ENCODE measurements at regions of chr11 and their contacts with region 1.

Region 1: DNA sequence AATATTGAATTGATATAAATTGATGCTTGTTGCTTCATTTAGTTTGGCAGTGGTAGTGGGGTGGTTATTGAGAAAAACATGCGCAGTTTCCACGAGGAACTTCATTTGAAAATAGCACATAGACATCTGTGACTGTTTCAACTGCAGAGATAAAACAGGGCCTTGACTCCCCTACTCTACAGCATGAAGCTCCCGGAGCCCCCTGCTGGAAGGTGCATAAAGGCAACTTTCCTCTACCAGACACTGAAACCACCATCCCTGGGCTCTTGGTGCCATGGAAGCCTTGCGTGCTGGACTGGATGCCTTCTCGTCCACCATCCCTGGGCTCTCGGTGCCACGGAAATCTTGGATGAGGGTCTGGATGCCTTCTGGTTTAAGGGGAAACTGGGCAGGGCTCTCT is 195.9 kb downstream of the CSNK2A3 start:
- DNase-seq: peak; percentile 69
- ATAC-seq: peak; percentile 42
- H3K4me3 Mint-ChIP-seq: no peak overlapping the region
- H3K27ac Mint-ChIP-seq: peak overlapping the region; percentile 76
- H3K4me1 Mint-ChIP-seq: peaks cover 26% of the 10 kb centered on the region
- H3K27me3 Mint-ChIP-seq: no peaks in the 10 kb centered on the region

Region 2: DNA sequence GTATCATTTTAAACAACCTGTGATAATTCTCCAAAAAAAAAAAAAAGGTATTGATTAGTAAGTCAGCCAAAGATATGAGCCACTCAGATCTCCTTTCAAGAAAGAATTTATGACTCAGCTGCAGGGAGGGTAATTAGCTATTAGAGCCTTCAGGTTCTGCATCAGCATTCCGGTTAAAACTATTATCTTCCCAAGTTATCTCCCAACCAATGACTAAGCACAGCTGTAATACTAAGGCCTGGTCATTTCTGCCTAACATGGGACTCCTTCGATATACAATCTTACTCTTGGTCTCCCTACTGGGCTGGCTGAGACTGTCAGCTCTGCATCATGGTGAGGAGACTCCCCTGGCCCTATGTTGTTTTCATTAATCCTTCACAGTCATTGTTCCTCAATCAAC is 923.6 kb before region 1 on chr11:
- CTCF ChIA-PET with region 1: no interaction called
- POLR2A ChIA-PET with region 1: no interaction called
- intact Hi-C with region 1: no loop called
- DNase-seq: no peak
- ATAC-seq: no peak
- H3K4me3 Mint-ChIP-seq: no peak overlapping the region
- H3K27ac Mint-ChIP-seq: no peak overlapping the region
- H3K4me1 Mint-ChIP-seq: no peaks in the 10 kb centered on the region
- H3K27me3 Mint-ChIP-seq: no peaks in the 10 kb centered on the region

Region 3: DNA sequence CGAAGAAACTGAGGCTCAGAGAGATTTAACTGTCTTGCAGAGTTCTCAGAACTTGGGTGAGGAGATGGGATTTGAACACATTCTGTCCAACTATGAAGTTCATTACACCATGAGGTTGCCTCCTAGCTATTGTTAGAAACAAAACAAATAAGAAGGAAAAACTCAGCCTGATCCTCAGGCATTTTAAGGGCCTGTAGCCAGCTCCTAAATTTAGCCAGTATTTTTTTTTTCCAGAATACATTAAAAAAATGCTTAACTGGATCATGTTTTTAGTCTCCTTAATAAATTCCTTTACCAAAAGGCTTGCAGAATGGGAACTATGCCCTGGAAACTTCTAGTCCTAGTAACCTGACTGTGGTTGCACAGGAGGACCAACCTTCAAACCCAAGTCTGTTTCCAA is 16.1 kb before region 1 on chr11:
- CTCF ChIA-PET with region 1: interaction called, 18 read pairs
- POLR2A ChIA-PET with region 1: interaction called, 3 read pairs
- intact Hi-C with region 1: no loop called
- DNase-seq: no peak
- ATAC-seq: no peak
- H3K4me3 Mint-ChIP-seq: no peak overlapping the region
- H3K27ac Mint-ChIP-seq: no peak overlapping the region
- H3K4me1 Mint-ChIP-seq: peaks cover 18% of the 10 kb centered on the region
- H3K27me3 Mint-ChIP-seq: no peaks in the 10 kb centered on the region

Region 4: DNA sequence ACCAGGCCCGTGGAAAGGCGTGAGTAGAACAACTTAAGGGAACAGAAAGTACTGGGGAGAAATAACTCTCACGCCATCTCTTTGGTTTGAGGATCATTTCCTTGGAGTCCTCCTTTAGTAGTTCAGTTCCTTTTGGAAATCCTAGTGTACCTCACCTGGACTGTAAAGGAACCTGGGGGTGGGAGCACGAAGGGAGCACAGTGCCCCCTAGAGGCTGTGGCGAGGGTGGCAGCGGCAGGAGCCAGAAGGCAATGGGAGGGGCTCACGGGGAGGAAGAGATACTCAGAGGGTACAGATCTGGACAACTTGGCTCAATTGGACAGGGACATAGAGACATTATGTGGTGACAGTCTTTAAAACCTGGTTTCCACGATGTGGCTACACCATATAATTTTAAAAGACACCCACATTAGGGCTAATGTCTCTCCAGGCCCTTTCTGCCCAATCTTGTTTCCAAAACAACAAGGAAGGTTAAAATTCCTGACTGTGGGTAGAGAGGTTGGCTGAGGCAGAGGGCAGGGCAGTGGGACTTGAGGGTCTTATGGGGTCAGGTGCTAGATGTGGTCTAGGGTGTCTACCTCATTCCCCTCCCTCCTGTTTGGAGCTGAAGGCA is 108.9 kb after region 1 on chr11:
- CTCF ChIA-PET with region 1: no interaction called
- POLR2A ChIA-PET with region 1: no interaction called
- intact Hi-C with region 1: loop called in 1 of 2 experiments (anchors 5 kb)
- DNase-seq: peak; percentile 83
- ATAC-seq: peak; percentile 68
- H3K4me3 Mint-ChIP-seq: no peak overlapping the region
- H3K27ac Mint-ChIP-seq: no peak overlapping the region
- H3K4me1 Mint-ChIP-seq: no peaks in the 10 kb centered on the region
- H3K27me3 Mint-ChIP-seq: peaks cover 2% of the 10 kb centered on the region

Measured in activated CD4-positive, alpha-beta T cell treated with anti-CD3 and anti-CD28 coated beads for 36 hours (primary cell).